HepG2 (cell line): ENCODE measurements at regions of chr1 and their contacts with region 1.

Region 1: GRCh38 chr1:208132287-208132883 is 111.8 kb downstream of the PLXNA2 start:
- DNase-seq: peak; percentile 54
- ATAC-seq: peak; percentile 96
- H3K4me3 ChIP-seq: no peak overlapping the region
- H3K27ac ChIP-seq: no peak overlapping the region
- H3K4me1 ChIP-seq: peaks cover 43% of the 10 kb centered on the region
- H3K27me3 ChIP-seq: no peaks in the 10 kb centered on the region
- CTCF ChIP-seq: peak; percentile 83
- EP300 ChIP-seq: no peak
- POLR2A ChIP-seq: no peak
- RAD21 ChIP-seq: peak; percentile 81

Region 2: DNA sequence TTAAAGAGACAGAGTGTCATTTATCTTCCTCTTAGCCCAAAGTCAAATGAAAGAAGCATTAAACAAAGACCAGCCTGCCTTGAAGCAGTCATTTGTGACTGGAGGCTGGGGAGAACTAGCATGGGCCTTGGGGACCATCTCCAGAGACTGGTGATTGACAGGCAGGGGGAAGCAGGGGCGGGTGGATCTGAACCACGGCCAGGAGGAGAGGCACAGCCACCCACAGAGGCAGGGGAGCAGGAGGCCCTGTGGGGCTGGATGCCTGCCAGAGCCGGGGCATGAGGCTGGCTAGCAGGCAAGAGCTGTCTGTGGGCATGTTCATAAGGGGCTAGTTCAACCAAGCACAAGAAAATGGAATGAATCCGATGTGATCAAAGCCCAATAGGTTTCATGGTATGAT is 37.9 kb after region 1 on chr1:
- CTCF ChIA-PET with region 1: no interaction called
- POLR2A ChIA-PET with region 1: no interaction called
- in situ Hi-C with region 1: no loop called
- intact Hi-C with region 1: loop called (anchors 5 kb)
- DNase-seq: no peak
- ATAC-seq: no peak
- H3K4me3 ChIP-seq: no peak overlapping the region
- H3K27ac ChIP-seq: no peak overlapping the region
- H3K4me1 ChIP-seq: peaks cover 90% of the 10 kb centered on the region
- H3K27me3 ChIP-seq: no peaks in the 10 kb centered on the region
- CTCF ChIP-seq: no peak
- EP300 ChIP-seq: no peak
- POLR2A ChIP-seq: no peak
- RAD21 ChIP-seq: no peak

Region 3: GRCh38 chr1:208238710-208239472 is 106.5 kb after region 1 on chr1:
- CTCF ChIA-PET with region 1: interaction called, 10 read pairs
- POLR2A ChIA-PET with region 1: interaction called, 8 read pairs
- in situ Hi-C with region 1: loop called (anchors 5 kb)
- intact Hi-C with region 1: no loop called
- DNase-seq: no peak
- ATAC-seq: peak; percentile 34
- H3K4me3 ChIP-seq: peak overlapping the region in 1 of 3 experiments; percentile 45; a peak in 1 of 6 replicates
- H3K27ac ChIP-seq: no peak overlapping the region
- H3K4me1 ChIP-seq: peaks cover 93% of the 10 kb centered on the region
- H3K27me3 ChIP-seq: peaks cover 0 to 18% of the 10 kb centered on the region in 2 experiments; a peak in 2 of 5 replicates
- CTCF ChIP-seq: peak; percentile 48
- EP300 ChIP-seq: no peak
- POLR2A ChIP-seq: no peak
- RAD21 ChIP-seq: no peak

Region 4: GRCh38 chr1:208245185-208245705 is 112.9 kb after region 1 on chr1:
- CTCF ChIA-PET with region 1: interaction called, 17 read pairs
- POLR2A ChIA-PET with region 1: interaction called, 8 read pairs
- in situ Hi-C with region 1: loop called (anchors 5 kb)
- intact Hi-C with region 1: loop called (anchors 1 kb)
- DNase-seq: peak; percentile 85
- ATAC-seq: peak; percentile 75
- H3K4me3 ChIP-seq: peak overlapping the region; percentile 52 to 81 (median 65); a peak in 5 of 6 replicates
- H3K27ac ChIP-seq: no peak overlapping the region
- H3K4me1 ChIP-seq: peaks cover 56% of the 10 kb centered on the region
- H3K27me3 ChIP-seq: peaks cover 0 to 25% of the 10 kb centered on the region in 2 experiments; a peak in 2 of 5 replicates
- CTCF ChIP-seq: peak; percentile 89
- EP300 ChIP-seq: no peak
- POLR2A ChIP-seq: no peak
- RAD21 ChIP-seq: peak; percentile 75